WTC11 (cell line): ENCODE measurements at regions of chr11 and their contacts with region 1.

Region 1: GRCh38 chr11:40293655-40294348 is 1165.7 kb downstream of the LRRC4C start:
- DNase-seq: peak; percentile 78
- ATAC-seq: peak; percentile 86
- H3K4me3 Mint-ChIP-seq: peak overlapping the region; percentile 89
- H3K27ac Mint-ChIP-seq: peak overlapping the region; percentile 83
- H3K4me1 Mint-ChIP-seq: peaks cover 24% of the 10 kb centered on the region
- H3K27me3 Mint-ChIP-seq: peaks cover 64% of the 10 kb centered on the region
- CTCF ChIP-seq: peak; percentile 76

Region 2: GRCh38 chr11:40125054-40125453 is 168.7 kb before region 1 on chr11:
- CTCF ChIA-PET with region 1: interaction called, 14 read pairs
- POLR2A ChIA-PET with region 1: no interaction called
- DNase-seq: no peak
- ATAC-seq: no peak
- H3K4me3 Mint-ChIP-seq: no peak overlapping the region
- H3K27ac Mint-ChIP-seq: no peak overlapping the region
- H3K4me1 Mint-ChIP-seq: no peaks in the 10 kb centered on the region; the same call in 1 of the 2 replicates
- H3K27me3 Mint-ChIP-seq: peaks cover 3% of the 10 kb centered on the region; the same call in 1 of the 2 replicates
- CTCF ChIP-seq: no peak

Region 3: DNA sequence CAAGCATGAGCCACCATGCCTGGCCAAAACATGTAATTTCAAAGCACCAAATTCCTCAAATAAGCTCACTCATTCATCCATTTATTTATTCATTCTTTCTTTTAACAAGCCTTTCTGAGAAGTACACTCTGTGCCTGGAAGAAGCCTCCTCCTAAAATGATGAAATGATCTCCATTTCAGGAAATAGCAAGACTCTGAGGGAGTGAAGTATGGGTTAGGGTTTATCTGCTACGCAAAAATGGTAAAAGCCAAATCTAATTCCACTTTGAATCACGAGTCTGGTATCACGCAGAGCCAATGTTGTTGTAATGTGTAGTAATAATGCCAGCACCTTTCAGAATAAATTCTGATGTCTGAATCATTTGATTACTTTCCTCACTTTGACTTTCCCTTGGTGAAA is 123.8 kb after region 1 on chr11:
- CTCF ChIA-PET with region 1: no interaction called
- POLR2A ChIA-PET with region 1: no interaction called
- DNase-seq: no peak
- ATAC-seq: no peak
- H3K4me3 Mint-ChIP-seq: no peak overlapping the region
- H3K27ac Mint-ChIP-seq: no peak overlapping the region
- H3K4me1 Mint-ChIP-seq: no peaks in the 10 kb centered on the region
- H3K27me3 Mint-ChIP-seq: no peaks in the 10 kb centered on the region
- CTCF ChIP-seq: no peak